Activated B cell treated with CpG ODN at 0.5 μM for 24 hours (primary cell): ENCODE measurements at regions of chr17 and their contacts with region 1.

Region 1: DNA sequence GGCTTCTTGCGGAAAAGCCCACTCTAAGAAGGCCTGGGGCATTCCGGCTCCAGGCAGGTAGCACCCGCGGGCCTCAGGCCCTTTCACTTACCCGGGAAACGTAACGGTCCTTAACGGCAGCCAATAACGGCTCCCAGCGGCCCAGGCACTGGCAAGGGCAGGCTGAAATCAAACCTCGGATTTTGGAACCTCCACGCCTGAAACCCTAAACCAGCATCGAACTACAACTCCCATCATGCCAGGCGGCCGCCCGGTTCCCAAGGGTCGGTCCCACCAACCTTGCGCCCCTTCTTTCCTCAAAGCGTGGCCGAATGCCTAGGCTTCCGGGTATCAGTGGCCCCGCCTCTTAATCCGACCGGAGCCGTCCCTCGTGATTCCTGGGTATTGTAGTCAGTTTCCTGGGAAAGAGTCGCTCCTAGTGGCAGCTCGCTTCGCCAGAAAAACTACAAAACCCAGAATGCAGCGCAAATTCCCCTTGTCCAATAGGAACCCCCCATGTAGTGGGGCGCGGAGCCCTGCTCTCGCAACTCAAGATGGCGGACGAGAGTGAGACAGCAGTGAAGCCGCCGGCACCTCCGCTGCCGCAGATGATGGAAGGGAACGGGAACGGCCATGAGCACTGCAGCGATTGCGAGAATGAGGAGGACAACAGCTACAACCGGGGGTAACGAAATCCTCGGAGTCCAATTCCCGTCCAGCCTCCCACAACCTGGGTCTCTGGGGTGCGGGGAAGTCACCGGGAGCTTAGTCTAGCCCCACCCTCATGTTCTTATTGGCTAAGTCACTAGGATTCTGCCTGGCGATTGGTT is at the start of gene NMT1:
- DNase-seq: peak; percentile 86
- ATAC-seq: peak; percentile 90
- H3K4me3 Mint-ChIP-seq: peak within 1 kb of the TSS; percentile 100
- H3K27ac Mint-ChIP-seq: peak within 1 kb of the TSS; percentile 100
- H3K4me1 Mint-ChIP-seq: peaks cover 50% of the 10 kb centered on the region
- H3K27me3 Mint-ChIP-seq: no peaks in the 10 kb centered on the region
- CTCF ChIP-seq: no peak
- total RNA-seq, gene NMT1: 154 and 164 TPM in 2 replicates

Region 2: GRCh38 chr17:44775136-44775837 is 285.7 kb before region 1 on chr17:
- CTCF ChIA-PET with region 1: no interaction called
- POLR2A ChIA-PET with region 1: interaction called, 3 read pairs
- intact Hi-C with region 1: loop called (anchors 1 kb)
- DNase-seq: peak; percentile 90
- ATAC-seq: peak; percentile 96
- H3K4me3 Mint-ChIP-seq: peak overlapping the region; percentile 87
- H3K27ac Mint-ChIP-seq: no peak overlapping the region
- H3K4me1 Mint-ChIP-seq: peaks cover 18% of the 10 kb centered on the region
- H3K27me3 Mint-ChIP-seq: no peaks in the 10 kb centered on the region
- CTCF ChIP-seq: no peak

Region 3: DNA sequence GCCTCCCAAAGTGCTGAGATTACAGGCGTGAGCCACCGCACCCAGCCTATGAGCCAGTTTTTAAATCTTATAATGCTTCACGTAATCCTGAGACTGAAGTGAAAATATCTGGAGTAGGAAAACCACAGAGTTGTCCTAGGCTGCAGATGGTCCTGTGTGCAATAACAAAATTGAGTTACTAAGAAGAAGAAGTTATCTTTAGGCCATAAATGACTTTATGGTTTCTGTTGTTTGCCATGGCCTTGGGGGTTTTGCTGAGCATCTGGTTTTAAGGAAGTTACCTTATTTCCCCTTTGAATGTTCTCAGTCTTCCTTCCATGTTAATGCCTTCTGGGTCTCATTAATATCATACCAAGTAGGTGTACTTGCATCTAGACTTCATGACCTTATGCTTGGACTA is 16.6 kb after region 1 on chr17:
- CTCF ChIA-PET with region 1: no interaction called
- POLR2A ChIA-PET with region 1: interaction called, 5 read pairs
- intact Hi-C with region 1: loop called (anchors 2 kb)
- DNase-seq: no peak
- ATAC-seq: peak; percentile 78
- H3K4me3 Mint-ChIP-seq: no peak overlapping the region
- H3K27ac Mint-ChIP-seq: peak overlapping the region; percentile 79
- H3K4me1 Mint-ChIP-seq: peaks cover 25% of the 10 kb centered on the region
- H3K27me3 Mint-ChIP-seq: no peaks in the 10 kb centered on the region
- CTCF ChIP-seq: no peak

Region 4: DNA sequence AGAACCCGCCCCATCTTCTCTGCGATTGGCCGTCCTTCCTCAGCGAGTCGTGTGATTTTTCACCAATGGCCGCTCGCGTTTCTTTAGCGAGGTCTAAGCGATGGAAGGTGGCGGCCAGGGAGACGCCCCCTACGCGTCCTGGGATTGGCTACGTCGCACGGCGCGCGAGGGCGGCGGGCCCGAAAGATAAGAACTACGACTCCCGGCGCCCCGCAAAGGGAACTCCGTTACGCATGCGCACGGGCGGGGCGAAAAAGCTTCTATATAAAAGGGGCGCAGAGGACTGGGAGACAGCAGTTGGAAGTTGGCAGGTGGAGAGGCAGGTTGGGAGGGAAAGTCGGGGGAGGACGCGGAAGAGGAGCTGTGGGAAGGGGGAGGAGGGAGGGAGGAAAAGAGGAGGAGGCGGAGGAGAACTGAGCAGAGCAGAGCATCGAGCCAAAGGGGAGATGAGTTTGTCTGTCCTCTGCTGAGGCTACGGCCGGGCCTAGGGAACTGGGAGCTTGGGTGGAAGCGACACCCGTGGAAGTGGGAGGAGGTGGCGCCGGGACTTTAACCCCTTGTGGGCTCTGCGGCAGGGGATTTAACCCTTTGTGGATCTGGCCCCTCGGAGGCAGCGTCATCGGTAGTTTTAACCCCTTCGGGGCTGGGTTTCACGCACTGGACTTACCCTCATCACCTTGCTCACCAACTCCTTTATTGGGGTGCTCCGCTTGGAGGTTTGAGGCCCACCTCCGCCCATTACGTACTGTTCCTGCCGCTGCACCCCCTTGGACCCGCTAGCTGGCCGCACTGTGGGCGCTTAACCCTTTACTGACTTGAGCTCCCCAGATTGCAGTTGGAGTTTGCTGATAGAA is 87.4 kb after region 1 on chr17 and contains the start of gene HEXIM1:
- CTCF ChIA-PET with region 1: interaction called, 5 read pairs
- POLR2A ChIA-PET with region 1: interaction called, 21 read pairs
- intact Hi-C with region 1: loop called (anchors 1 kb)
- DNase-seq: peak; percentile 97
- ATAC-seq: peak; percentile 74
- H3K4me3 Mint-ChIP-seq: peak within 1 kb of the TSS; percentile 96
- H3K27ac Mint-ChIP-seq: peak within 1 kb of the TSS; percentile 100
- H3K4me1 Mint-ChIP-seq: peaks cover 61% of the 10 kb centered on the region
- H3K27me3 Mint-ChIP-seq: no peaks in the 10 kb centered on the region
- CTCF ChIP-seq: no peak
- total RNA-seq, gene HEXIM1: 19.5 and 21.5 TPM in 2 replicates

Region 5: GRCh38 chr17:45317112-45317928 is 256.3 kb after region 1 on chr17:
- CTCF ChIA-PET with region 1: no interaction called
- POLR2A ChIA-PET with region 1: no interaction called
- intact Hi-C with region 1: loop called (anchors 1 kb)
- DNase-seq: peak; percentile 99
- ATAC-seq: peak; percentile 79
- H3K4me3 Mint-ChIP-seq: peak overlapping the region; percentile 90
- H3K27ac Mint-ChIP-seq: peak overlapping the region; percentile 96
- H3K4me1 Mint-ChIP-seq: peaks cover 49% of the 10 kb centered on the region
- H3K27me3 Mint-ChIP-seq: no peaks in the 10 kb centered on the region
- CTCF ChIP-seq: no peak